Testis (tissue), 5 donors: ENCODE measurements at regions of chr7 and their contacts with region 1.

Region 1: DNA sequence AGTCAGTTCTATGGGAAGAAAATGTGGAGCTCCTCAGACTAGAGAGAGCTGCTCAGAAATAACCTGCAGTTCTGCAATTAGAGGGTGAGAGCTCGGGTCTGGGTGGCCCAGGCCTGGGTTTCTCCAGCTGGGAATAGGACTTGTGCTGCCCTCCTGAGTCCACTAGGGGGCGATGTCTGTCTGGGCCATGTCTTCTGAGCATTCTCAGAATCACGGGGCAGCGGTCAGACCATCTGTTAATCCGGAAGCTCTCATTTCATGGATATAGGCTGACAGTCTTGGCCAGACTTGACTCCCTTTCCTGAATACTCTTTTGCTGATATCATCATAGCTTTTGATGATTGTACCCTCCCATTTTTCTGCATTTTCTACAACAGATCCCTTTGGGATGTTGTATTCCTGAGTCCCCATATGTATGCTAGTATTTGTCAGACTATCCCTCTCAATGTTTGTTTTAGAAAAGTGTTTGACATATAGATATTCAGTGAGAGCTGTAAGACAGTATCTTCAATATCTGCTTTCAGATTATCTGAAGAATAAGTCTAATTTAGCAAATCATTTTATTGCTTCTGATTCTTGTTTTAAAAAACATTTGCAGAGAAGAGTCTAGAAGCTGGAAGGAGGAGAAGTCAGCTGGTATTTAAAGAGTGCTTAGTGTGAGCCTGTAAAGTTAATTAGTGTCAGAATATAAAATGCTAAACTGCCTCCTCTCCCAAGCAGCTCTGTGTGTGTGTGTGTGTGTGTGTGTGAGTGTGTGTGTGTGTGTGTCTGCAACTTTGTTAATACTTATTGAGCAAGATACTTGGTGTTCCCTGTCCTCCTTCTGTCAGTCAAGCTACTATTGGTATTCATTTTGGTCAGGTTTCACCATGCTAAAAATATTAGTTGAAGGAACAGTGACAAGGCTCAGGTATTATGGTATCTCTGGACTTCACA is 38.0 kb downstream of the STARD3NL start:
- DNase-seq: peak; percentile 89
- H3K4me3 ChIP-seq: no peak overlapping the region
- H3K27ac ChIP-seq: peak overlapping the region in 1 of 2 donors; percentile 38
- H3K4me1 ChIP-seq: peaks cover 9% of the 10 kb centered on the region
- H3K27me3 ChIP-seq: no peaks in the 10 kb centered on the region
- CTCF ChIP-seq: peak; percentile 77 to 95 (median 91)
- POLR2A ChIP-seq: no peak

Region 2: DNA sequence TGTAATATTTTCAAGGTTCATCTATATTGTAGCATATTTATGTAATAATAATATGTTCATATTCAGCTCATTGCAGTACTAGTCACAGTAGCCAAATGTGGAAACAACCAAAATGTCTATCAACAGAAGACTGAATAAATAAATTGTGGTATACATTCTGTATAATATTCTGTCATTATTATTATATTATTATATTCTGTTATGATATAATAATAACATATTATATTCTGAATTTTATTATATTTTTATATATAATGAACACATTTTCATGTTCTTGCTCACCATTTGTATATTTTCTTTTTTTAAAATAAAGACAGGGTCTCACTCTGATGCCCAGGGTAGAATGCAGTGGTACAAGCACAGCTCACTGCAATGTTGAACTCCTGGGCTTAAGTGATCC is 129.1 kb before region 1 on chr7:
- intact Hi-C with region 1: no loop called
- DNase-seq: no peak
- H3K4me3 ChIP-seq: no peak overlapping the region
- H3K27ac ChIP-seq: no peak overlapping the region
- H3K4me1 ChIP-seq: no peaks in the 10 kb centered on the region
- H3K27me3 ChIP-seq: no peaks in the 10 kb centered on the region
- CTCF ChIP-seq: no peak
- POLR2A ChIP-seq: no peak

Region 3: DNA sequence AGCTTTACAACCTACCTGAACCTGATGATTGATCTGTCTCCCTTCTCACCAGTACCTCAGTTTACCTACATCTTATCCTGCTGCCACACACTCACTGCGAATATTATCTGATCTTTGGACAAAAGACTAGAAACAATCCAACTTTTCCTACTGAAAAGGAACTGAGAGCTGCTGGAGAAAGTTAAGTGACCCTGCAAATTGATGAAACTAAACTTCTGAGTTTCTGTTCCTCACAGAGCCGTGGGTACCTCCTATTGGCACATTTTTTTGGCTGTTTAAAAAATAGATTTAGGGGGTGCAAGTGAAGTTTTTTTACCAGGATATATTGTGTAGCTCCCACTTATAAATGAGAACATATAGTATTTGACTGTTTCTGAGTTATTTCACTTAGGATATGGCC is 103.9 kb before region 1 on chr7:
- intact Hi-C with region 1: loop called (anchors 10 kb)
- DNase-seq: no peak
- H3K4me3 ChIP-seq: no peak overlapping the region
- H3K27ac ChIP-seq: no peak overlapping the region
- H3K4me1 ChIP-seq: no peaks in the 10 kb centered on the region
- H3K27me3 ChIP-seq: no peaks in the 10 kb centered on the region
- CTCF ChIP-seq: no peak
- POLR2A ChIP-seq: no peak